ENCODE measurements at regions of chr6 and their contacts with region 1.

Region 1: DNA sequence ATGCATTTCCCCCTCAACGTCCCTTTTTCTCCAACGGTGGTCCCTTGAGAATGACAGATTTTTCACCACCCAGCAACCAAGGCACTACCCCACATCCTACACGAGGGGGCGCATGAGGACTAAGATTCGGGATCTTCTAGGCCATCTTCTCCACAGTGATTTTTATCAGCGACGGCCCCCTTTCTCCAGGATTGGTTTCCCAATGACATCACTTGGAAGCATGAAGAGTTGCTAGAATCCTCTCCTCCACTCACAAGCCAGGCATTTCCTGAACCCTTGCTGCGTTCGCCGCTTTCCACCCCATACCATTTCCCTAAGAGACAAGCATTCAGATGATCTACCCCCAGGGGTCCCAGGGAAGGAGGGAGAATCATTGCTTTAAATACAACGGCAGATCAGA is 252.0 kb downstream of the HIVEP2 start:
- DNase-seq: peak; percentile 44 to 76 (median 66)
- H3K4me3 ChIP-seq: no peak overlapping the region
- H3K27ac ChIP-seq: peak overlapping the region in 1 of 2 donors; percentile 4
- H3K4me1 ChIP-seq: peaks cover 8% of the 10 kb centered on the region
- H3K27me3 ChIP-seq: no peaks in the 10 kb centered on the region
- CTCF ChIP-seq: peak; percentile 62 to 92 (median 87)
- EP300 ChIP-seq: no peak
- POLR2A ChIP-seq: no peak

Region 2: DNA sequence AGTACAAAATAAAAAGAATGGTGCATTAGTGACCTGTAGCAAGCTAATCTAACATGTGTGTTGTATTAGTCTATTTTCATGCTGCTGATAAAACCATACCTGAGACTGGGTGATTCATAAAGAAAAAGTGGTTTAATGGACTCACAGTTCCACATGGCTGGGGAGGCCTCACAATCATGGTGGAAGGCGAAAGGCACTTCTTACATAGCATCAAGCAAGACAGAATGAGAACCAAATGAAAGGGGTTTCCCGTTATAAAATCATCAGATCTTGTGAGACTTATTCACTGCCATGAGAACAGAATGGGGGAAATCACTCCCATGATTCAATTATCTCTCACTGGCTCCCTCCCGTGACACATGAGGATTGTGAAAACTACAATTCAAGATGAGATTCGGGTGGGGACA is 322.4 kb after region 1 on chr6:
- intact Hi-C with region 1: loop called in 1 of 4 experiments (anchors 5 kb)
- DNase-seq: no peak
- H3K4me3 ChIP-seq: no peak overlapping the region
- H3K27ac ChIP-seq: no peak overlapping the region
- H3K4me1 ChIP-seq: peaks cover 1% of the 10 kb centered on the region
- H3K27me3 ChIP-seq: no peaks in the 10 kb centered on the region
- CTCF ChIP-seq: no peak
- EP300 ChIP-seq: no peak
- POLR2A ChIP-seq: no peak

Region 3: GRCh38 chr6:143427109-143427817 is 734.3 kb after region 1 on chr6:
- intact Hi-C with region 1: loop called (anchors 2 to 5 kb)
- DNase-seq: peak; percentile 56 to 83 (median 78)
- H3K4me3 ChIP-seq: no peak overlapping the region
- H3K27ac ChIP-seq: no peak overlapping the region
- H3K4me1 ChIP-seq: no peaks in the 10 kb centered on the region
- H3K27me3 ChIP-seq: no peaks in the 10 kb centered on the region
- CTCF ChIP-seq: peak; percentile 80 to 83 (median 81)
- EP300 ChIP-seq: no peak
- POLR2A ChIP-seq: no peak